Sigmoid colon (tissue), 7 donors: ENCODE measurements at regions of chr15 and their contacts with region 1.

Region 1: DNA sequence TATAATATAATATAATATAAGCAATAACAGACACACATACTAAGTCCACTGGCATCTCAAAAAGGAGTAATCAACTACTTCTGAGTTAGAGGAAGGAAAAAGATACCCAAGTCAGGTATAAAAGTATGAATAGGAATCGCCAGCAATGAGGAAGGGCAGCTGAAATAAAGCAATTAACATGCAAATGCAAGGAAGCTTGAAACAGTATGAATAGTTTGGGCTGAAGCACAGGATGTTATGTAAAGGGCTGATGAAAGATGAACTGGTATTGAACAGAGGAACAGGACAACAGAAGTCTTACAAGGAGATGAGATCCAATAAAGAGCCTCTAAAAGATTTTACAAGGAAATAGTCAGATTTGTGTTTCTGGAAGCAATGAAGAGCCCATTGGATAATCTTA is 7.1 kb downstream of the COPS2 start:
- DNase-seq: no peak
- H3K4me3 ChIP-seq: no peak overlapping the region
- H3K27ac ChIP-seq: no peak overlapping the region
- H3K4me1 ChIP-seq: peaks cover 0 to 64% (median 27%) of the 10 kb centered on the region in 4 donors
- H3K27me3 ChIP-seq: no peaks in the 10 kb centered on the region
- CTCF ChIP-seq: no peak
- EP300 ChIP-seq: no peak
- POLR2A ChIP-seq: no peak

Region 2: GRCh38 chr15:49131403-49131802 is 16.9 kb before region 1 on chr15:
- intact Hi-C with region 1: loop called (anchors 1 kb)
- DNase-seq: no peak
- H3K4me3 ChIP-seq: no peak overlapping the region
- H3K27ac ChIP-seq: no peak overlapping the region
- H3K4me1 ChIP-seq: no peaks in the 10 kb centered on the region
- H3K27me3 ChIP-seq: no peaks in the 10 kb centered on the region
- CTCF ChIP-seq: no peak
- EP300 ChIP-seq: no peak
- POLR2A ChIP-seq: no peak

Region 3: DNA sequence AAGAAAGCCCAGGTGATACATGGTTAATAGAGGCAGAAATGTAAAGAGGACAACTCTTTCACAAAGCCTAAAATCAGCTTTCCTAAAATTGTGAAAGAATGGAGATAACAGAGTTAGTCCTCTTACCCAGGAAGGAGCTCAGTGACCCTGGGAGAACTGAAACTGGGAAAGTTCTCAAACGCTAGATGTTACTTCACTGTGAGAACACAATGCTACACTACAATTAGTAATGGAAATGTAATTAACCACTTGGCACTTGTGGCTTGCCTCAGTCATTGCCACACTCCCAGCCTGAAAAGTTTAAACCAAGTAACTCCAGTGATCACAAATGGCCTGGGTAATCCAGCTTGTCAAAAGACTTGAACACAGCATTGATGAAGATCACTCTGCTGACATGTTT is 172.1 kb after region 1 on chr15:
- intact Hi-C with region 1: no loop called
- DNase-seq: no peak
- H3K4me3 ChIP-seq: no peak overlapping the region
- H3K27ac ChIP-seq: no peak overlapping the region
- H3K4me1 ChIP-seq: peaks cover 0 to 8% (median 6%) of the 10 kb centered on the region in 4 donors
- H3K27me3 ChIP-seq: no peaks in the 10 kb centered on the region
- CTCF ChIP-seq: no peak
- EP300 ChIP-seq: no peak
- POLR2A ChIP-seq: no peak